Sigmoid colon (tissue), 7 donors: ENCODE measurements at regions of chr3 and their contacts with region 1.

Region 1: GRCh38 chr3:61561374-61562041 is at the start of gene PTPRG:
- DNase-seq: peak; percentile 97
- H3K4me3 ChIP-seq: peak within 1 kb of the TSS; percentile 85 to 93 (median 90)
- H3K27ac ChIP-seq: peak within 1 kb of the TSS; percentile 94 to 98 (median 94)
- H3K4me1 ChIP-seq: peaks cover 0 to 22% (median 14%) of the 10 kb centered on the region in 4 donors
- H3K27me3 ChIP-seq: no peaks in the 10 kb centered on the region
- CTCF ChIP-seq: no peak
- EP300 ChIP-seq: no peak
- POLR2A ChIP-seq: peak; percentile 40 to 48
- total RNA-seq, gene PTPRG: 62.7 to 76.3 (median 73.7) TPM

Region 2: DNA sequence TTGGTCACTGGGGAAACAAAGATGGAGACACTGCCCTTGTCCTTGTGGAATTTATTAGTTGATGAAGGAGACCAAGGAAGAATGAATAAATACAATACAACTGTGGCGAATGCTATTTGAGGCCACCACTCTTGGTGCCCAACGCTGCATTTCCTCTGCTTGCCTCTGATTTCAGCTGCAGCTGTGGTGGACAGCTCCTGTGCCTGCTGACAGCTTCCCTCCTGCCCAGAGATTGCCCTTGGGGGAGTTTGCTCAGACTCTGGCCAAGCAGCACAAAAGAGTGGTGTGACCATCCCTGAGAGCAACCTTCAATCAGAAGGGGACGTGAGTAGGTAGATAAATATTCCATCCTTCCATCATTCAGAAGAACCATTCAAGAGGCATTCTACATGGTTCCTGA is 245.6 kb before region 1 on chr3:
- intact Hi-C with region 1: no loop called
- DNase-seq: no peak
- H3K4me3 ChIP-seq: no peak overlapping the region
- H3K27ac ChIP-seq: no peak overlapping the region
- H3K4me1 ChIP-seq: no peaks in the 10 kb centered on the region
- H3K27me3 ChIP-seq: no peaks in the 10 kb centered on the region
- CTCF ChIP-seq: no peak
- EP300 ChIP-seq: no peak
- POLR2A ChIP-seq: no peak

Region 3: DNA sequence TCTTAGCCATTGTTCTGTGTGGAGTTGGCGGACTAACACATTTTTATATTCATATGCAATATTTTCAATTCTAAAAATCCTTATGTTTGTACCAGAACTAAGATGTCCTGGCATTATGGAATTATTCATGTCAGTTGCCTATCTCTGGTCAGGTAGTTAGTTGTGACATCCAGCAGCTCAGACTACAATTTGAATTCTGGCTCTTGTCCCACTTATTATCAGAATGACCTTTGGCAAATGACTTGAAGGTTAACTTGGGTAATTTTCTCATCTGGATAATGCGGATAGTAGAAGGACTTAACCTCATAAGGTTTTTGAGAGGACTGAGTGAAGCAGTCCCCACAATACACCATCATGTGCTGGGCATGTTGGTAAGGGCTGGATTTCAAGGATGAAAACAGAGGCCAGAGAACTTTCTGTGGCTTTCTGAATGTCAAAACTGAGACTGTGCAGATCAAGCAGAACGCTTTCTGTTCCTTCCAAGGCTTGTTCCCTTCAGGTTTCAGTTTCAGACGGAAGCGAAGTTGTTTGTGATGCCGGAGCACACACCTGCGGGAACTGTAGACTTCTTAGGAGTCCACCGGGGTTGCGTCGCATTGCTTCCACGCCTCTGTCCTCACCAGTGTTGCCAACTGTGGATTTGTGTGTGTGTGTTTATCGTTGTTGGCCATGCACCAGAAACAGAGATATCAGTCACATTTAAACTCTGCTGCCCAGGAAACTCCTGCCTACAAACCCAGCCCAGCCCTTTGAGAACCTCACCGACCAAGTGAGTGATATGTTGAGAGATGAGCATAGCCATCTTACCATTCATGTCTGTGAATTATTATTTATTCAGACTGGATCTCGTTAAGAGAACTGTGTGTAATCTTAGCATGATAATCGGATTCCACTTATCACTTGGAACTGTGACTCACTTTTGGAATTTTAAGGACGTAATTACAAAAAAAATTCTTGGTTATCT is 75.9 kb after region 1 on chr3:
- intact Hi-C with region 1: loop called (anchors 5 kb)
- DNase-seq: peak; percentile 75
- H3K4me3 ChIP-seq: peak overlapping the region; percentile 35 to 48 (median 46)
- H3K27ac ChIP-seq: peak overlapping the region; percentile 61 to 84 (median 82)
- H3K4me1 ChIP-seq: peaks cover 0 to 45% (median 23%) of the 10 kb centered on the region in 4 donors
- H3K27me3 ChIP-seq: no peaks in the 10 kb centered on the region
- CTCF ChIP-seq: no peak
- EP300 ChIP-seq: peak; percentile 12 to 74 (median 61)
- POLR2A ChIP-seq: no peak

Region 4: DNA sequence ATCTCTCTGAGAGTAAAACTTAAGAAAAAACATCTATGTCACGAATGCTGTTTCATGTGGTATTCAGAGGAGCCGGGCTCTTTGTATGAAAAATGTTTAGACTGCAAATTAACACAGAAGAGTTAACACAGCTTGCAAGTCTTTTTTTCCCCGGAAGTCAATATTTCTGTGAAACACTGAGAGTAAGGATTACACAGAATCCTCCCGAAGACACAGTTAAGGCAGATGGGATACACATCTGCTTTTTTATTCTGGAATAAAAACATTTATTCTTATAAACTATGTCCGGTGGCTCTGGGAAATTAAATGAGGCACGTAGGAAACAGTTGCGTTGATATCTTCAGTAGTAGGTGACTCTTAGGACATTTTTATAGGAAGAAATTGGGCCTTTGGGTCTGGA is 180.5 kb after region 1 on chr3:
- intact Hi-C with region 1: loop called (anchors 10 kb)
- DNase-seq: no peak
- H3K4me3 ChIP-seq: no peak overlapping the region
- H3K27ac ChIP-seq: no peak overlapping the region
- H3K4me1 ChIP-seq: peaks cover 0 to 30% (median 18%) of the 10 kb centered on the region in 4 donors
- H3K27me3 ChIP-seq: no peaks in the 10 kb centered on the region
- CTCF ChIP-seq: no peak
- EP300 ChIP-seq: no peak
- POLR2A ChIP-seq: no peak

Region 5: DNA sequence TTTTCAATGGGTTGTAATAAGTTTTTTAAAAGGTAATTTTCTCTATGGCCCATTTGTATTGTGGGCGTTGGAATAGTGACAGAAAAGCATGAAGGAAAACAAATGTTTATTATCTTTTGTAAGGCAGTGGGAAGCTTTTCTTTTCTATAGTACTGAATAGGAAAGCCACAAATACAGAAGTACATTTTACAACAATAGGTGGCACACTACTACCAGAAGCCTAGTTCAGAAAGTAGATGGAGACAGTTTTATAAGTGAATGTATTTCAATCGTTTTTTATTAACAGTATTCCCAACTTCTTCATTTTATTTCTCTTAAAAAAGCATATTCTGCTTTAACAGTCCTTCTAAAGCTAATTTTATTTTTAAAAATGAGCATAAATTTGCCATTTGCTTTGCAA is 296.5 kb after region 1 on chr3:
- intact Hi-C with region 1: loop called (anchors 5 kb)
- DNase-seq: no peak
- H3K4me3 ChIP-seq: no peak overlapping the region
- H3K27ac ChIP-seq: no peak overlapping the region
- H3K4me1 ChIP-seq: peaks cover 0 to 35% (median 24%) of the 10 kb centered on the region in 4 donors
- H3K27me3 ChIP-seq: no peaks in the 10 kb centered on the region
- CTCF ChIP-seq: peak in 1 of 4 experiments; percentile 45
- EP300 ChIP-seq: no peak
- POLR2A ChIP-seq: no peak

Region 6: GRCh38 chr3:62188681-62189383 is 627.3 kb after region 1 on chr3:
- intact Hi-C with region 1: loop called (anchors 1 kb)
- DNase-seq: peak; percentile 88
- H3K4me3 ChIP-seq: no peak overlapping the region
- H3K27ac ChIP-seq: no peak overlapping the region
- H3K4me1 ChIP-seq: peaks cover 0 to 17% (median 4%) of the 10 kb centered on the region in 4 donors
- H3K27me3 ChIP-seq: no peaks in the 10 kb centered on the region
- CTCF ChIP-seq: peak; percentile 72 to 84 (median 78)
- EP300 ChIP-seq: no peak
- POLR2A ChIP-seq: no peak